Activated T-helper 2 cell treated with anti-CD3 and anti-CD28 coated beads, Interferon-gamma antibody, Interleukin-2, Interleukin-4, amounts not matched to agents 10 μg/mL and 5 μg/mL and 100 μg/mL, durations not matched to agents 14 hours and 24 hours and 36 hours (primary cell): ENCODE measurements at regions of chr1 and their contacts with region 1.

Region 1: GRCh38 chr1:47432071-47433036 is 5.5 kb upstream of the FOXD2 start:
- DNase-seq: peak; percentile 43
- H3K4me3 Mint-ChIP-seq: no peak overlapping the region
- H3K27ac Mint-ChIP-seq: no peak overlapping the region
- H3K4me1 Mint-ChIP-seq: peaks cover 34% of the 10 kb centered on the region
- H3K27me3 Mint-ChIP-seq: peaks cover 25% of the 10 kb centered on the region

Region 2: DNA sequence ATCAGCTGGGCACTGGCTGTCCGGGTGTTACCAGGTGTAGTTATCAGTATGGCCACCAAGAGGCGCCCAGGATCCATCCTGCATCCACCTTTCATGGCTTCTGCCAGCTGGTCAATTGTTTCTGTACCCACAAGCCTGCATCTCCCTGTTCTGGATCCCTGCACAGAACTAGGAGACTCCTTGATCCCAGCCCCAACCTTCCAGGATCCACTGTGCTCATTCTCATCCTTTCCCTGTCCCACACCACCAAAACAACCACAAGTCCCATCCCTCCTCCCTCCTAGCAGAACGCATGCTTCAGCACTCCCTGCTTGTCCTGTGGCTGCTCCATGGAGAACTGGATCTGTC is 43.5 kb before region 1 on chr1:
- intact Hi-C with region 1: loop called (anchors 5 kb)
- DNase-seq: peak; percentile 19
- H3K4me3 Mint-ChIP-seq: no peak overlapping the region
- H3K27ac Mint-ChIP-seq: no peak overlapping the region
- H3K4me1 Mint-ChIP-seq: no peaks in the 10 kb centered on the region
- H3K27me3 Mint-ChIP-seq: peaks cover 10% of the 10 kb centered on the region

Region 3: GRCh38 chr1:47725992-47726855 is 293.9 kb after region 1 on chr1:
- intact Hi-C with region 1: loop called (anchors 1 kb)
- DNase-seq: peak; percentile 38
- H3K4me3 Mint-ChIP-seq: no peak overlapping the region
- H3K27ac Mint-ChIP-seq: no peak overlapping the region
- H3K4me1 Mint-ChIP-seq: peaks cover 6% of the 10 kb centered on the region
- H3K27me3 Mint-ChIP-seq: peaks cover 42% of the 10 kb centered on the region